ENCODE measurements at regions of chr9 and their contacts with region 1.

Region 1: DNA sequence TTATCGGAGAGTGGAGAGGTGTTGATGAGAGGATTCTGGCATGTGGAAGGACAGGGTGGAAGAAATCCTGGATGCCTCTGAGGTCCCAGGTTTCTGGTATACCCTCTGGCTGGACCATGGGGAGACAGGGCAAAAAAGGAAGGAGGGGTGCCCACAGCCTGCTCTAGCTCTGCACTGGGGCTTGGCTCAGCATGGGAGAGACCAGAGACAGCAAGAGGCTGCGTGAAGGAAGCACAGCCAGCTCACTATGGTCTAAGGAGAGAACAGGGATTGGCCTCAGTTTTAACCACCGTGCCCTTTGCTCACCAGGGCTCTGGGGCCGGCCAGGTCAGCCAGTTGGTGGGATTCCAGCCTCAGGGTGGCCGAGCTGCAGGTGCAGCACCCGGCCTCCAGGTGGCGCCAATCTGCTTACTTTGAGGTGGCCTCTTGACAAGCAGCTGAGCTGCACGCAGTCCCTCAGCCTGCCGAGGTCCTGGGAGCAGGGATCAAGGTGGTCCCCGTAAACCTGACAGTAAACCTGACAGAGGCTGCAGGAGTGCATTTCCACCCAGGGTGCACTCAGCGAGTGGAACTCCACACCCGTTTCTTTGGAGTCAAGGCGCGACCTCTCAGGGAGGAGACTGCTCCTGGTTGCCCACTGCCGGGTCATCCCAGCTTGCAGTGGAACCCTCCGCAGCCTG is 25.0 kb upstream of the SPTLC1 start:
- DNase-seq: peak; percentile 73
- H3K4me3 ChIP-seq: peak overlapping the region; percentile 63
- H3K27ac ChIP-seq: no peak overlapping the region
- H3K4me1 ChIP-seq: peaks cover 18% of the 10 kb centered on the region
- H3K27me3 ChIP-seq: peaks cover 48% of the 10 kb centered on the region
- CTCF ChIP-seq: peak; percentile 93

Region 2: DNA sequence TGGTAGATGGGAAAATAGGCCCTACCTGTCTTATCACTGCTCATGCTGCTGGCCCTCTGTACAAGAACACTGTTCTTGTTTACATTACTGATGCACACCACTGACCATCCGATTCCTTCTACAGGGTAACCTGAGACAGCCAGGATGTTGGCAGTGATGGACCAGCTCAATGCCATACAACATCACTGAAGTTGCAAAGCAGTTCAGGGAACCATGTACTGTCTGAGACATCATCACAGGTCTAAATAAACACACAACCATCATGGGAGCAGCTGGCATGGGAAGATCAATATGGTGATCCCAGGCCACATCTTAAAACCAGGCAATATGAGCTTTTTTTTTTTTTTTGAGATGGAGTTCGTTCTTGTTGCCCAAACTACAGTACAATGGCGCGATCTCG is 94.3 kb after region 1 on chr9:
- intact Hi-C with region 1: loop called (anchors 10 kb)
- DNase-seq: no peak
- H3K4me3 ChIP-seq: no peak overlapping the region
- H3K27ac ChIP-seq: no peak overlapping the region
- H3K4me1 ChIP-seq: no peaks in the 10 kb centered on the region
- H3K27me3 ChIP-seq: no peaks in the 10 kb centered on the region
- CTCF ChIP-seq: no peak

Measured in left ventricle myocardium inferior (tissue), 1 donor.